Activated CD4-positive, alpha-beta T cell treated with anti-CD3 and anti-CD28 coated beads for 36 hours (primary cell): ENCODE measurements at regions of chr11 and their contacts with region 1.

Region 1: DNA sequence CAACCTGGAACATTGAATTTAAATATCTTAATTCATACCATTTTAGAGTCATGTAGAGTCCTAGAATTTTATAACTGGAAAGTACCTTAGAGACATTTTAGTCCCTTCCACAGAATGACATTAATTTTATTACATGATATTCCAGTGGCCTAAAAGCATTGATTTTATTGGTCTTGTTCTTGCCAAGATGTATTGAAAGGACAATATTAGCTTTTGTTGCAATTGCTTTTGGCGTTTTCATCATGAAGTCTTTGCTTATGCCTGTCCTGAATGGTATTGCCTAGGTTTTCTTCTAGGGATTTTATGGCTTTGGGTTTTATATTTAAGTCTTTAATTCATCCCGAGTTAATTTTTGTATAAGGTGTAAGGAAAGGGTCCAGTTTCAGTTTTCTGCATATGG is 29.0 kb downstream of the OR51F1 start:
- DNase-seq: no peak
- ATAC-seq: no peak
- H3K4me3 Mint-ChIP-seq: no peak overlapping the region
- H3K27ac Mint-ChIP-seq: no peak overlapping the region
- H3K4me1 Mint-ChIP-seq: no peaks in the 10 kb centered on the region
- H3K27me3 Mint-ChIP-seq: peaks cover 15% of the 10 kb centered on the region

Region 2: DNA sequence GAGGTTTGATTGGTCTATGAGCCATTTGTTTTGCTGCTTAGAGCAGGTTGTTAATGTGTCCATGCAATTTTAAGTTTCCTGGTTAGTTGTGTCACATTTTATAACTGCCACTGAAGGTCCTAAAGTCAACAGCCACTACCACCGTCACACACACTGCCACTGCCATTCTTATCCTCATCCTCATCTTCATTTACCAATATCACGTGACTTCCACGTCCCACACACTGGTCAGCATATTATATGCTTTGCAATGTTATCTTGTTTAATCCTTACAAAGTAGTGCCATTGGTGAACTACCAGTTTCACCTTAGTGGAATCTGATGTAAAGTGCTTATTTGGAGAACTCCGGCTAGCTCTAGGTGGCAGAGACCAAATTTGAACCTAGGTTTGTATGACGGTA is 26.4 kb before region 1 on chr11:
- CTCF ChIA-PET with region 1: no interaction called
- POLR2A ChIA-PET with region 1: no interaction called
- intact Hi-C with region 1: loop called in 1 of 2 experiments (anchors 2 kb)
- DNase-seq: no peak
- ATAC-seq: no peak
- H3K4me3 Mint-ChIP-seq: no peak overlapping the region
- H3K27ac Mint-ChIP-seq: no peak overlapping the region
- H3K4me1 Mint-ChIP-seq: no peaks in the 10 kb centered on the region
- H3K27me3 Mint-ChIP-seq: peaks cover 18% of the 10 kb centered on the region